Astrocyte of the cerebellum (primary cell): ENCODE measurements at regions of chr20 and their contacts with region 1.

Region 1: GRCh38 chr20:39631557-39631956 is 669.4 kb downstream of the DHX35 start:
- DNase-seq: peak; percentile 16
- H3K4me3 ChIP-seq: no peak overlapping the region
- CTCF ChIP-seq: no peak

Region 2: GRCh38 chr20:39563349-39563748 is 68.2 kb before region 1 on chr20:
- in situ Hi-C with region 1: no loop called
- DNase-seq: no peak
- H3K4me3 ChIP-seq: no peak overlapping the region
- CTCF ChIP-seq: no peak

Region 3: DNA sequence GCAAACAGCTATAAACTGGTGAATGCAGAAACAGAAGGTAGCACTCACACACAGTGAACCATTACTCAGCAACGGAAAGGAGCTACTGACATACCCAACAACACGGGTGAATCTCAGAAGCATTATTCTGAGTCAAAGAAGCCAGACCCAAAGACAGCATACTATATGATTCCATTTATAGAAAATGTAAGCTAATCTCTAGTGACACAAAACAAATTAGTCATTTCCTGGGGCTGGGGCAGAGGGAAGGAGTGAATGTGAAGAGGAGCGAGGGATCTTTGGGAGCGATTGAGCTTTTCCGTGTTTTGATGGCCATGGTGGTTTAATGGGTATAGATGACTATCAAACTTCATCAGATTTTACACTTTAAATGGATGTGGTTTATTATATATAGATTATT is 54.8 kb before region 1 on chr20:
- in situ Hi-C with region 1: no loop called
- DNase-seq: no peak
- H3K4me3 ChIP-seq: no peak overlapping the region
- CTCF ChIP-seq: no peak

Region 4: DNA sequence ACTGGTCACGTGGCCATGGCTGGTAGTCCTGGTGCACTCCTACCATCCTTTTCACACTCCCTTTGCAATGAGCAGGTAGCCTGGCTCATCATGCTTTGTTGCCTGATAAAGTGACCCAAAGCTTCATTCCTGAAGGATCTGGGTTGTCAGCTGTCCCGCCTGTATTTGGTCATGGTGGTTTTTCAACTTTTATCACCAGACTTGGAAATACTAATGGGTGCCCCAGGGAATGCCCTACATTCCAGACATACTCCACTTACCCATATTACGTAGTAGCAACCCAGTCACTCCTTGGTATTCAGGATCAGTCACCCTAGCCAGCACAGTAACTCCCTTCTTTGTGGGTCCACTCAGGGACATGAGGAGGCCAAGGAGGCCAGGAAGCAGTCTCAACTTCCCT is 858.3 kb after region 1 on chr20:
- in situ Hi-C with region 1: loop called (anchors 10 kb)
- DNase-seq: peak; percentile 20
- H3K4me3 ChIP-seq: no peak overlapping the region
- CTCF ChIP-seq: no peak